ENCODE measurements at regions of chr17 and their contacts with region 1.

Region 1: GRCh38 chr17:43125133-43125966 is at the start of gene BRCA1:
- H3K4me3 ChIP-seq: peak within 1 kb of the TSS; percentile 75
- H3K27ac ChIP-seq: peak within 1 kb of the TSS; percentile 69
- H3K4me1 ChIP-seq: peaks cover 4% of the 10 kb centered on the region; the same call in 1 of the 2 replicates
- CTCF ChIP-seq: no peak

Region 2: GRCh38 chr17:43085474-43085873 is 39.9 kb before region 1 on chr17:
- CTCF ChIA-PET with region 1: no interaction called
- POLR2A ChIA-PET with region 1: interaction called, 11 read pairs
- H3K4me3 ChIP-seq: no peak overlapping the region
- H3K27ac ChIP-seq: no peak overlapping the region
- H3K4me1 ChIP-seq: no peaks in the 10 kb centered on the region
- CTCF ChIP-seq: no peak

Region 3: GRCh38 chr17:43170766-43171585 is 45.6 kb after region 1 on chr17 and contains the start of gene NBR1:
- CTCF ChIA-PET with region 1: interaction called, 4 read pairs
- POLR2A ChIA-PET with region 1: interaction called, 10 read pairs
- H3K4me3 ChIP-seq: peak within 1 kb of the TSS; percentile 91
- H3K27ac ChIP-seq: peak within 1 kb of the TSS; percentile 72
- H3K4me1 ChIP-seq: peaks cover 4% of the 10 kb centered on the region; the same call in 1 of the 2 replicates
- CTCF ChIP-seq: peak; percentile 76; the same call in 1 of the 2 replicates